PC-3 (cell line): ENCODE measurements at regions of chr2 and their contacts with region 1.

Region 1: GRCh38 chr2:180334514-180334913 is 327.4 kb upstream of the CWC22 start:
- DNase-seq: no peak
- ATAC-seq: no peak
- H3K4me3 ChIP-seq: no peak overlapping the region
- H3K27ac ChIP-seq: no peak overlapping the region
- H3K4me1 ChIP-seq: no peaks in the 10 kb centered on the region
- H3K27me3 ChIP-seq: no peaks in the 10 kb centered on the region
- CTCF ChIP-seq: no peak

Region 2: GRCh38 chr2:180000434-180000833 is 334.1 kb before region 1 on chr2:
- CTCF ChIA-PET with region 1: no interaction called
- POLR2A ChIA-PET with region 1: no interaction called
- intact Hi-C with region 1: no loop called
- DNase-seq: peak; percentile 36
- ATAC-seq: no peak; the same call in 1 of the 2 replicates
- H3K4me3 ChIP-seq: no peak overlapping the region
- H3K27ac ChIP-seq: no peak overlapping the region
- H3K4me1 ChIP-seq: peaks cover 19% of the 10 kb centered on the region
- H3K27me3 ChIP-seq: no peaks in the 10 kb centered on the region
- CTCF ChIP-seq: no peak

Region 3: GRCh38 chr2:180191432-180192124 is 142.9 kb before region 1 on chr2:
- CTCF ChIA-PET with region 1: no interaction called
- POLR2A ChIA-PET with region 1: interaction called, 40 read pairs
- intact Hi-C with region 1: no loop called
- DNase-seq: peak; percentile 21
- ATAC-seq: no peak; the same call in 1 of the 2 replicates
- H3K4me3 ChIP-seq: peak overlapping the region; percentile 42; the same call in 1 of the 2 replicates
- H3K27ac ChIP-seq: no peak overlapping the region
- H3K4me1 ChIP-seq: no peaks in the 10 kb centered on the region
- H3K27me3 ChIP-seq: no peaks in the 10 kb centered on the region
- CTCF ChIP-seq: no peak

Region 4: DNA sequence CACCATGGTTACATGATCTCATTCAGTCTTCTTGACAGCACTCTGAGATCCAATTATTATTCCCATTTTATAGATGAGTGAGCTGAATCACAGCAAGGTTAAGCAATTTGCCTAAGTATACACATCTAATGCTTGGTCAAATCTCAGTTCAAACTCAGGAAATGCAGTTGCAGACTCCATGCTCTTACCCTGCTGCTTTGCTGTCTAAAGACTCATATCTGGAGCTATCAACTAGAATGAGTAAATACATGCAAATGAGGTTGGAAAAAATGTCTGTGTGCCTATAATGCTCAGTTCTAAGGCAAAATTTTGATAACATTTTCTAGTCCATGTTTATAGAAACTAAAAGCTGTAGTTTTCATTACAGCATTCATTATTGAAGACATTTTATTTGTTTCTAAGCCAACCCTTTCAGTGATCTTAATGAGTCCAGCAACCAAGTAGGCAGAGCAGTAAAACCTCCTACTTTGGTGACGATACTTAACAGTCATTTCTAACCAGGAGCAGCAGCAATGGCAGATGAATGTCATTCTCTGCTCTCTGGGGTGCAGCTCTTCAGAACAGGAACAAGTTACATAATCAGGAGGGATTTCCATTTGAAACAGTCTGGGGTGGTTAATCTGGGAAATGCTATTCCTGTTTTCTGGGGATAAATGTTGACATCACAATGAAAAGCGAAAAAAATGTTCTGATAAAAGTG is 249.1 kb after region 1 on chr2:
- CTCF ChIA-PET with region 1: no interaction called
- POLR2A ChIA-PET with region 1: no interaction called
- intact Hi-C with region 1: no loop called
- DNase-seq: no peak
- ATAC-seq: no peak
- H3K4me3 ChIP-seq: no peak overlapping the region
- H3K27ac ChIP-seq: no peak overlapping the region
- H3K4me1 ChIP-seq: no peaks in the 10 kb centered on the region
- H3K27me3 ChIP-seq: no peaks in the 10 kb centered on the region
- CTCF ChIP-seq: no peak